ENCODE measurements at regions of chr17 and their contacts with region 1.

Region 1: DNA sequence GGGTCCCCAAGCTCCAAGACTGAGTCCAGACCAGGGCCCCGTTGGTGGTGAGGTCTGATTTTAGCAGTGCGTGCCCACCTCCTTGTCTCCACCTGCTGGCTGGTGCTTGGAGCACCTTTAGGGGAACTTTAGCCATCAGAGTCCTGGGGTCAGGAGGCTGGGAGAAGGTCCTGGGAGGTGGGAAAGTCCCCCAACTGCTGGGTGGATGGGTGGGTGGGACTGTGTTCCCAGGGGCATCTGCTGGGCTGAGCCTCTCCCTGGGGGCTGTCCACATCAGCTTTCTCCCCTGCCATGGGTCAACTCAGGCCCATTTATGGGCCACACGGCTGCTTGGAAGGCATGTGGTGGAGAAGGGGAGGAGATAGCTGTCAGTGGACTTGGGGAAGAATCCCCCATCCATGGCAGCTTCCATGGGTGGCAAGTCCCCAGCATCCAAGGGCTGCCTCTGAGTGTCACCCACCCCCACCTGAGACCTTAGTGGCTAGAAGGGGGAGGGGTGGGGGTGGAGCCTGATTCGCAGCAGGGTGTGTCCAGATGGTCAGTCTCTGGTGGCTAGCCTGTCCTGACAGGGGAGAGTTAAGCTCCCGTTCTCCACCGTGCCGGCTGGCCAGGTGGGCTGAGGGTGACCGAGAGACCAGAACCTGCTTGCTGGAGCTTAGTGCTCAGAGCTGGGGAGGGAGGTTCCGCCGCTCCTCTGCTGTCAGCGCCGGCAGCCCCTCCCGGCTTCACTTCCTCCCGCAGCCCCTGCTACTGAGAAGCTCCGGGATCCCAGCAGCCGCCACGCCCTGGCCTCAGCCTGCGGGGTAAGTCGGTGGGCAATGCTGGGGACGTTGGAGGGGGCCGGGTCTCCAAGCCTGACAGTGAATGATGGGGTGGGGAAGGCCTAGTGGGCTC is at the start of gene TRPV2:
- DNase-seq: peak; percentile 78
- ATAC-seq: peak; percentile 55
- H3K4me3 Mint-ChIP-seq: peak within 1 kb of the TSS; percentile 99
- H3K27ac Mint-ChIP-seq: peak within 1 kb of the TSS; percentile 100
- H3K4me1 Mint-ChIP-seq: peaks cover 46% of the 10 kb centered on the region
- H3K27me3 Mint-ChIP-seq: no peaks in the 10 kb centered on the region
- total RNA-seq, gene TRPV2: 124 to 134 TPM

Region 2: GRCh38 chr17:16122697-16123434 is 292.4 kb before region 1 on chr17:
- CTCF ChIA-PET with region 1: no interaction called
- POLR2A ChIA-PET with region 1: no interaction called
- DNase-seq: no peak
- ATAC-seq: no peak
- H3K4me3 Mint-ChIP-seq: no peak overlapping the region
- H3K27ac Mint-ChIP-seq: no peak overlapping the region
- H3K4me1 Mint-ChIP-seq: no peaks in the 10 kb centered on the region
- H3K27me3 Mint-ChIP-seq: no peaks in the 10 kb centered on the region

Region 3: DNA sequence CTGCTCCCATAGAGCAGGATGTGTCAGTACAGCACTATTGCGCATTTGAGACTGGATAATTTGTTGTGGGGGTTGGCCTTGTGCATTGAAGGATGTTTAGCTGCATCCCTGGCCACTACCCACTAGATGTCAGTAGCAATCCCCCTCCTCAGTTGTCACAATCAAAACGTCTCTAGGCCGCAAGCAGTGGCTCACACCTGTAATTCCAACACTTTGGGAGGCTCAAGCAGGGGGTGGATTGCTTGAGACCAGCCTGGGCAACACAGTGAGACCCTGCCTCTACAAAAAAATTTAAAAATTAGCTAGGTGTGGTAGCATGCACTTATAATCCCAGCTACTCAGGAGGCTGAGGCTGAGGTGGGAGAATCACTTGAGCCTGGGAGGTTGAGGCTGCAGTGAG is 110.4 kb before region 1 on chr17:
- CTCF ChIA-PET with region 1: interaction called, 19 read pairs
- POLR2A ChIA-PET with region 1: no interaction called
- DNase-seq: peak; percentile 37
- ATAC-seq: no peak
- H3K4me3 Mint-ChIP-seq: no peak overlapping the region
- H3K27ac Mint-ChIP-seq: no peak overlapping the region
- H3K4me1 Mint-ChIP-seq: no peaks in the 10 kb centered on the region
- H3K27me3 Mint-ChIP-seq: no peaks in the 10 kb centered on the region

Region 4: GRCh38 chr17:16353317-16354174 is 61.7 kb before region 1 on chr17 and contains the start of gene CENPV:
- CTCF ChIA-PET with region 1: interaction called, 10 read pairs
- POLR2A ChIA-PET with region 1: interaction called, 7 read pairs
- DNase-seq: peak; percentile 67
- ATAC-seq: peak; percentile 87
- H3K4me3 Mint-ChIP-seq: peak within 1 kb of the TSS; percentile 83
- H3K27ac Mint-ChIP-seq: peak within 1 kb of the TSS; percentile 79
- H3K4me1 Mint-ChIP-seq: peaks cover 25% of the 10 kb centered on the region
- H3K27me3 Mint-ChIP-seq: peaks cover 9% of the 10 kb centered on the region
- total RNA-seq, gene CENPV: 28.6 to 36.4 TPM

Region 5: GRCh38 chr17:16380640-16381495 is 34.4 kb before region 1 on chr17 and contains the start of gene UBB:
- CTCF ChIA-PET with region 1: interaction called, 27 read pairs
- POLR2A ChIA-PET with region 1: interaction called, 66 read pairs
- DNase-seq: peak; percentile 97
- ATAC-seq: peak; percentile 92
- H3K4me3 Mint-ChIP-seq: peak within 1 kb of the TSS; percentile 97
- H3K27ac Mint-ChIP-seq: peak within 1 kb of the TSS; percentile 96
- H3K4me1 Mint-ChIP-seq: peaks cover 38% of the 10 kb centered on the region
- H3K27me3 Mint-ChIP-seq: no peaks in the 10 kb centered on the region
- total RNA-seq, gene UBB: 1,415 to 1,441 TPM

Region 6: DNA sequence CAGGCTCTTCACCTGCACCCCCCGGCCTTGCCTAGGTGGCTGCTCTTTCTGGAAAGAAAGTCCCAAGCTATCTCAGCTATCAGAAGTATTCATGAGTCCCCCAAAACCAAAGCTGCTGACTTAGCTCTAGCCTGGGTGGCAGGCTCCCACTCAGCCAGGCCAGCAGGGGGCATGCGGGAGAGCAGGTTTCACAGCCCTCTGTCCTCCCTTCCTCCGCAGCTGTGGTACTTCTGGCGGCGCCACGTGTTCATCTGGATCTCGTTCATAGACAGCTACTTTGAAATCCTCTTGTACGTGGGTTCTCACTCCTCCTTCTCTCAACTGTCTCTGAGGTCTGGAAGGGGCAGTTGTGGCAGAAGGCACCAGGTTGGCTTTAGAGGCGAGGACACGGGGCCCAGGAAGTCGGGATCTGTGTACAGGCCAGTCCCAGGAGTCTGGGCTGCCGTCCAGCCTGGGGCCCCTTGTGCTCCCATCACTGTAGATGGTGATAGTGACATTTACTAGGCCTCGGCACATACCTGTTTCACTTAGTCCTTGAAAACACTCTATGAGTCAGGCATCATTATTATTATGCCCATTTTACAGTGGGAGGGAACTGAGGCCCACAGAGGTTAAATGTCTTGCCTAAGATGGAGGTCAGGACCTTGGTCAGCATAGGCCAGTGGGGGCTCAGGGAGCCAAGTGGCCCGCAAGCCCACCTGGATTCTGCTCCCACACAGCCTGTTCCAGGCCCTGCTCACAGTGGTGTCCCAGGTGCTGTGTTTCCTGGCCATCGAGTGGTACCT is 13.0 kb after region 1 on chr17:
- CTCF ChIA-PET with region 1: interaction called, 27 read pairs
- POLR2A ChIA-PET with region 1: interaction called, 4 read pairs
- DNase-seq: peak; percentile 60
- ATAC-seq: peak; percentile 82
- H3K4me3 Mint-ChIP-seq: no peak overlapping the region
- H3K27ac Mint-ChIP-seq: no peak overlapping the region
- H3K4me1 Mint-ChIP-seq: no peaks in the 10 kb centered on the region
- H3K27me3 Mint-ChIP-seq: no peaks in the 10 kb centered on the region

Region 7: DNA sequence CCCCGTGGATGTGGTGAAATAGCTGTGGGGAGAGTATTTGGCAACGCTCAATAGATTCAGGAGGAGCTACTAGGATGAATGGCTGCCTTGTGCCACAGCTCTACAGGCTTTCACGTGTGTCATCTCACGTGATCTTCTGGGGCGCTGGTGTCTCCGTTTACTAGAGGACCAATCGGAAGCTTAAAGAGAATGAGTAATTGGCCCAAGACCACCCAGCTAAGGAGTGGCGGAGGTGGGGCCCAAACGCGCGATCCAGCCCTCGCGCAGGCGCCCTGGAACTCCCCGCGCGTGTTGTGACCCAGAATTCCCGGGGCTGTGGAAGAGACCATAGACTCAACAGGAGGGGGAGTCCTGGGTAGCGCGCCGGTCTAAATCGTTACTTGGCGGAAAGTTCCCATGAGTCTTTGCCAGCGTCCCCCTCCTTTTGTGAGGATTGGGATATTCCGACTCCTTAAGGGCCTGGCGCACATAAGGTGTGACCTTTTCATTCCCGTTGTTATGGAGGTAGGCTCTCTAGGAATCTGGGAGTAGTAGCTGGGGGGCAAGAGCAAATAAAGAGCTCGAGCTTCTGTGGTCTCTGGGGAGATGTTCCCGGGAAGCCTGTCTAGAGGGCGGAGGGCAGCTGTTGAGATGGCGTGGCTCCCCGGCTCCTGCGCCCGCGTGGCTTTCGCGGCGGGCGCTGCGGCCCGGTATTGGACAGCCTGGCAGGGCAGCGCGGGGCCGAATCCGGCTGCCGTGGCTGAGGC is 23.5 kb after region 1 on chr17:
- CTCF ChIA-PET with region 1: interaction called, 35 read pairs
- POLR2A ChIA-PET with region 1: interaction called, 57 read pairs
- DNase-seq: peak; percentile 97
- ATAC-seq: peak; percentile 90
- H3K4me3 Mint-ChIP-seq: peak overlapping the region; percentile 100
- H3K27ac Mint-ChIP-seq: peak overlapping the region; percentile 99
- H3K4me1 Mint-ChIP-seq: peaks cover 49% of the 10 kb centered on the region
- H3K27me3 Mint-ChIP-seq: no peaks in the 10 kb centered on the region

Measured in activated CD8-positive, alpha-beta T cell treated with anti-CD3 and anti-CD28 coated beads, Interleukin-2, amount 10 ng/mL, durations not matched to agents 7 days and 5 days (primary cell).